ENCODE measurements at regions of chr14 and their contacts with region 1.

Region 1: GRCh38 chr14:75861161-75861621 is 120.6 kb downstream of the TGFB3 start:
- DNase-seq: peak in 1 of 5 donors; percentile 41
- ATAC-seq: peak; percentile 66 to 99 (median 91)
- H3K4me3 ChIP-seq: no peak overlapping the region
- H3K27ac ChIP-seq: peak overlapping the region in 4 of 12 donors; percentile 15 to 62 (median 43)
- H3K4me1 ChIP-seq: peaks cover 0 to 17% (median 4%) of the 10 kb centered on the region in 12 donors
- H3K27me3 ChIP-seq: no peaks in the 10 kb centered on the region
- CTCF ChIP-seq: no peak
- POLR2A ChIP-seq: no peak

Region 2: GRCh38 chr14:75720842-75721498 is 140.2 kb before region 1 on chr14:
- intact Hi-C with region 1: loop called in 2 of 10 experiments (anchors 5 to 10 kb)
- DNase-seq: peak in 4 of 5 donors; percentile 56 to 65 (median 60)
- ATAC-seq: peak; percentile 74 to 87 (median 77)
- H3K4me3 ChIP-seq: peak overlapping the region in 5 of 12 donors; percentile 9 to 31 (median 22)
- H3K27ac ChIP-seq: peak overlapping the region; percentile 26 to 79 (median 66)
- H3K4me1 ChIP-seq: peaks cover 3 to 56% (median 27%) of the 10 kb centered on the region in 12 donors
- H3K27me3 ChIP-seq: no peaks in the 10 kb centered on the region
- CTCF ChIP-seq: no peak
- POLR2A ChIP-seq: no peak

Region 3: DNA sequence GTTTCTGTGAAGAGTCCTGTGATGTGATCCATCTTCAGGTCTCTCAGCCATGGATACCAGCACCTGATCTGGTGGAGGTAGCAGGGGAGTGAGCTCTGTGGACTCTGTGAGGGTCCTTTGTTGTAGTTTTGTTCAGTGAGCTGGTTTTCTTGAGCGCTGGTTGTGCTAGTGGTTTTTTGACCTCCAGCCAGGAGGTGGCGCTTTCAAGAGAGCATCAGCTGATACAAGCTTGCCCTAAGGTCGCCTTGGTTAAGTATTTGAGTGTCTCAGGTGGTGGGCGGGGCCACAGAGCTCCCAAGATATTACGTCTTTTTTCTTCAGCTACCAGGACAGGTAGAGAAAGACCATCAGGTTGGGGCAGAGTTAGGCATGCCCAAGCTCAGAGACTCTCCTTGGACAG is 60.4 kb before region 1 on chr14:
- intact Hi-C with region 1: loop called in 1 of 10 experiments (anchors 10 kb)
- DNase-seq: no peak
- ATAC-seq: no peak
- H3K4me3 ChIP-seq: no peak overlapping the region
- H3K27ac ChIP-seq: no peak overlapping the region
- H3K4me1 ChIP-seq: peaks cover 0 to 26% (median 12%) of the 10 kb centered on the region in 12 donors
- H3K27me3 ChIP-seq: no peaks in the 10 kb centered on the region
- CTCF ChIP-seq: no peak
- POLR2A ChIP-seq: no peak

Region 4: DNA sequence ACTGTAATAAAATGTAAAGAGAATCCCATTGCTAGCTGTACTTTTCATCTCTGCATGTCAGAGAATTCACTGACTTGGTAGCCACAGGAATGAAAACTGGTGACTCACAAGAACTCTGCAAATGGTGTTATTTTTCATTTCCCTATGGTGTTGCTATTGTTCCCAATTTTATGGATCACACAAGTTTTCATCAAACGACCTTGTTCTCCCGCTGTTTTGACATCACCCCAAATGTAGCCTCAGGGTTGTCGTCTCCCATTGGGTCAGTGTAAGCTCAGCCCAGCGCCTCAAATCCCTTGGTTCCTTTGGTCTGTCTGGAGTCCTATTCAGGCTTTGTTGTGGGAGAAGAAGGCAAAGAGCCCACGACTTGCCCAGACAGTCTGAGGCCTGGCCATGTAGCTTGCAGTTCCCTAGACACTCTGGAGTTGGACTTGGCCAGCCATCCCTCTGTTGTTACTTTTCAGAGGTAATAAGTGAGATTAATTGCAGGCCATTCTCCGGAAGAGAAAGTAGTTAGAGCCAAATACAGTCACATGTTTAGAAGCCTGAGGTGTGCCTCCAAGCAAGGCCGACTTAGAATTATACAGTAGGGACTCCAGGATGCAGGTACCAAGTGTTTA is 38.6 kb before region 1 on chr14:
- intact Hi-C with region 1: loop called in 2 of 10 experiments (anchors 5 kb)
- DNase-seq: peak in 2 of 5 donors; percentile 26 to 34
- ATAC-seq: peak; percentile 11 to 71 (median 47)
- H3K4me3 ChIP-seq: no peak overlapping the region
- H3K27ac ChIP-seq: peak overlapping the region in 8 of 12 donors; percentile 46 to 79 (median 74)
- H3K4me1 ChIP-seq: peaks cover 0 to 52% (median 34%) of the 10 kb centered on the region in 12 donors
- H3K27me3 ChIP-seq: no peaks in the 10 kb centered on the region
- CTCF ChIP-seq: no peak
- POLR2A ChIP-seq: no peak